ENCODE measurements at regions of chrX and their contacts with region 1.

Region 1: GRCh38 chrX:115650916-115651315 is 89.9 kb downstream of the PLS3 start:
- DNase-seq: no peak
- H3K4me3 ChIP-seq: no peak overlapping the region
- H3K27ac ChIP-seq: no peak overlapping the region
- H3K4me1 ChIP-seq: no peaks in the 10 kb centered on the region
- H3K27me3 ChIP-seq: no peaks in the 10 kb centered on the region
- CTCF ChIP-seq: peak in 2 of 4 experiments; percentile 18 to 25
- POLR2A ChIP-seq: no peak

Region 2: GRCh38 chrX:115690511-115691216 is 39.7 kb after region 1 on chrX:
- intact Hi-C with region 1: loop called (anchors 5 kb)
- DNase-seq: peak; percentile 21
- H3K4me3 ChIP-seq: no peak overlapping the region
- H3K27ac ChIP-seq: no peak overlapping the region
- H3K4me1 ChIP-seq: no peaks in the 10 kb centered on the region
- H3K27me3 ChIP-seq: no peaks in the 10 kb centered on the region
- CTCF ChIP-seq: peak in 3 of 4 experiments; percentile 45 to 58 (median 54)
- POLR2A ChIP-seq: no peak

Measured in prostate gland (tissue), 2 donors.